Mammary epithelial cell (primary cell): ENCODE measurements at regions of chr2 and their contacts with region 1.

Region 1: GRCh38 chr2:56132138-56132537 is 51.7 kb upstream of the CCDC85A start:
- DNase-seq: peak; percentile 17
- H3K4me3 ChIP-seq: no peak overlapping the region
- H3K27ac ChIP-seq: no peak overlapping the region
- H3K4me1 ChIP-seq: no peaks in the 10 kb centered on the region
- H3K27me3 ChIP-seq: peaks cover 4% of the 10 kb centered on the region
- CTCF ChIP-seq: peak; percentile 42 to 57

Region 2: GRCh38 chr2:55693181-55694134 is 438.7 kb before region 1 on chr2 and contains the start of gene PNPT1:
- CTCF ChIA-PET with region 1: no interaction called
- dilution Hi-C with region 1: no loop called
- in situ Hi-C with region 1: no loop called
- intact Hi-C with region 1: no loop called
- DNase-seq: peak; percentile 93
- H3K4me3 ChIP-seq: peak within 1 kb of the TSS; percentile 94 to 100 (median 98)
- H3K27ac ChIP-seq: peak within 1 kb of the TSS; percentile 85
- H3K4me1 ChIP-seq: no peaks in the 10 kb centered on the region
- H3K27me3 ChIP-seq: no peaks in the 10 kb centered on the region
- CTCF ChIP-seq: no peak
- total RNA-seq, gene PNPT1: 19.8 to 39.5 TPM

Region 3: GRCh38 chr2:55718165-55719008 is 413.8 kb before region 1 on chr2:
- CTCF ChIA-PET with region 1: no interaction called
- dilution Hi-C with region 1: no loop called
- in situ Hi-C with region 1: loop called in 1 of 2 experiments (anchors 25 kb)
- intact Hi-C with region 1: loop called (anchors 1 kb)
- DNase-seq: peak; percentile 52
- H3K4me3 ChIP-seq: no peak overlapping the region
- H3K27ac ChIP-seq: no peak overlapping the region
- H3K4me1 ChIP-seq: peaks cover 16% of the 10 kb centered on the region
- H3K27me3 ChIP-seq: no peaks in the 10 kb centered on the region
- CTCF ChIP-seq: peak; percentile 72 to 80

Region 4: GRCh38 chr2:56077352-56077915 is 54.7 kb before region 1 on chr2:
- CTCF ChIA-PET with region 1: interaction called, 4 read pairs
- dilution Hi-C with region 1: no loop called
- in situ Hi-C with region 1: no loop called
- intact Hi-C with region 1: loop called (anchors 2 kb)
- DNase-seq: peak; percentile 12
- H3K4me3 ChIP-seq: no peak overlapping the region
- H3K27ac ChIP-seq: no peak overlapping the region
- H3K4me1 ChIP-seq: no peaks in the 10 kb centered on the region
- H3K27me3 ChIP-seq: no peaks in the 10 kb centered on the region
- CTCF ChIP-seq: peak; percentile 57 to 61

Region 5: DNA sequence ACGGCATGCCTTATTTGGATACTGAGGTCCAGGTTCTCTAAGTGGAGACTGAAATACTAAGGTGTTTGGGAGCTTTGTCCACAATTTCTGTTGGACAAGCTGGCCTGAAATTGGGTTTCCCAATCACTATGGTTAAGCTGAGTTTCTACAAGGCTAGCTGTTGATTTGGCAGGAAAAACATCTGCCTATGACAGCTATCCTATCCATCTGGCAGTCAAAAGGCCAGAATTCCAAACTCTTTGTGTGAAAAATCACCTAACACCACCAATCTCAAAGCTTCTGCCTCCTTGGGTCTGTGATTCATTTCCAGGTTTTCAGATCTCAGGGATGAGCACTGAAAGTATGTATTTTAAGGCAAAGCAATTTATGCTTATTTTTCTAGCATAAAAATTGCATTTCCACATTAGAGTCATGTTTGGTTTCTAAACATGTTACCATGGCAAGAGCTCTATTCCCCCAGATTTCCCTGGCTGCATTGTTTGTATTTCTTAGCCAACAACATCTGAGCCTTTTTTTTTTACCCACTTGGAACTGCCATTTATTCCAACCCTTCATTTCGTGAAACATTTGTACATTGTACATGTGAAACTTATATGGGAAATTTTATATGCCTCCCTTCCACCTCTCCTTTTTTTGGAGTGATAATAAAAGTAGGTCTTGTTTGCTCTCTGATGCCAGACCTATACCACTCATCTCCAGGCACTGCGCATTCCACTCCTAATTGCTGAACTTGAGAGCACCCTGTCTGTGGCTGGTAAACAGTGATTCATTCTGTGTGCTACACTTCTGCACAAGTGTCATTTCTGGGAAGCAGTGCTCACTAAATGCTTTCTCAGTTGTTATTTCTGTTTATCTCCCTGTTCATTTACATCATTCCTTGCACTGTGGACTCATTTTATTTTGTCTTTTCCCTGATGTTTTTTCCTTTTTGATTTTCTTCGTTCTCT is 35.8 kb after region 1 on chr2:
- CTCF ChIA-PET with region 1: interaction called, 13 read pairs
- dilution Hi-C with region 1: no loop called
- in situ Hi-C with region 1: no loop called
- intact Hi-C with region 1: no loop called
- DNase-seq: peak; percentile 8
- H3K4me3 ChIP-seq: no peak overlapping the region
- H3K27ac ChIP-seq: no peak overlapping the region
- H3K4me1 ChIP-seq: no peaks in the 10 kb centered on the region
- H3K27me3 ChIP-seq: no peaks in the 10 kb centered on the region
- CTCF ChIP-seq: no peak

Region 6: DNA sequence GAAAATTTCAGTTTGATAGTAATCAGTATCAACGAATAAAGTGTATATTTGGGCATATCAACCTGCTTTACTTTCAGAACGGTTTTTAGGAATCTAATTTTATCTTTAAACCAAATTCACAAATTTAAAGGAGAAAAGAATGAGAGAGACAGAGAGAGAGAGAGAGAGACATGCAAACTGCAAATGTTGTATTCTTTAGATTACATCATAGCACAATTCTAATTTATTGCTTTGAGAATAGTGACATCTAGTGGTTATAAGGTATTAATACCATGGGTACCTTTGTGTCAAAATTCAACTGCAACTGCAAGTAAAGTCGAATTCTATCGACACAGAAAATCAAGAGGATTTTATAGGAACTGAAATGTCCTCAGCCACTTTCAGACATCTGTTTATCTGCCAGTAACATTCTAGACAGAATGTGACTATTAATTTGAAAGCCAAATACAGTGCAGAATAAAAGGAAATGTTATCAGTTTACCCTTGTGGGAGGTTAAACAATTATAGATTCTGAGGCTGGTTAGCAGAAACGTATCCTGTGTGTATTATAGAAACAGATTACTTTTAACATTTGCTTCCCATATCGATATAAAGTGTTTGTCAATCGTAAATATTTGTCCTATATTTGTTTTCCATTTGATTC is 1384.7 kb after region 1 on chr2:
- CTCF ChIA-PET with region 1: no interaction called
- dilution Hi-C with region 1: no loop called
- in situ Hi-C with region 1: no loop called
- intact Hi-C with region 1: loop called (anchors 5 kb)
- DNase-seq: peak; percentile 24
- H3K4me3 ChIP-seq: no peak overlapping the region
- H3K27ac ChIP-seq: no peak overlapping the region
- H3K4me1 ChIP-seq: no peaks in the 10 kb centered on the region
- H3K27me3 ChIP-seq: no peaks in the 10 kb centered on the region
- CTCF ChIP-seq: peak; percentile 33 to 48